Naive thymus-derived CD4-positive, alpha-beta T cell (primary cell): ENCODE measurements at regions of chr10 and their contacts with region 1.

Region 1: DNA sequence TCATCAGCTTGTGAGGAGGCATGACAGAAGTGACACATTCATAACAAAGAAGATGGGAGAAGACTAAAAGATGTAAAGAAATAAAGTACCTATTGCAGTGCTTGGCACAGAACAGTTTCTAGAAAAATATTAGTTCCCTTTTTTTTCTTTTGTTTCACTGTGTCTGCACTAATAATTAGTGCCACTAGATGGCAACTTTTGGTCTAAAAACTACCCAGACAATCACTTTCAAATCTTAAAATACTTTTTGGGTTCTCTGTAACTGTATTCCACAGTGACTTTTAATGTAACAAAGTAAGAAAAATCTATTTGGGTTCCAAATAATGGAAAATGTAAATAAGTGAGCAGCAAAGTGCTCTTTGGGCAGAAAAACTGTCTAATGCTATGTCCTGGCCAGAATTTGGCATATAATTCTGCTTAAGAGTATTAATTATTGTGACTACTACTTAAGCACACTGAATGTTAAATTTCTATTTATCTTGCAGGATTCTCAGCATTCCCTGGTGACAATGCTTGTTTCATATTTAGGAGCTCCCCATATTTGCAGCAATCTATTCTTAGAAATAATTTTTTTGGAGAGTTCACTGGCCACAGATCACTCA is 134.8 kb upstream of the KIF5B start:
- DNase-seq: peak in 6 of 9 donors; percentile 17 to 49 (median 42)
- ATAC-seq: peak; percentile 70
- H3K4me3 ChIP-seq: no peak overlapping the region
- H3K4me3 Mint-ChIP-seq: no peak overlapping the region
- H3K27ac ChIP-seq: no peak overlapping the region
- H3K27ac Mint-ChIP-seq: peak overlapping the region in 1 of 9 donors; percentile 3
- H3K4me1 ChIP-seq: no peaks in the 10 kb centered on the region
- H3K4me1 Mint-ChIP-seq: peaks cover 0 to 5% (median 4%) of the 10 kb centered on the region in 7 donors
- H3K27me3 ChIP-seq: no peaks in the 10 kb centered on the region
- H3K27me3 Mint-ChIP-seq: peaks cover 0 to 9% (median 0%) of the 10 kb centered on the region in 5 donors

Region 2: GRCh38 chr10:32207544-32207943 is 16.6 kb after region 1 on chr10:
- CTCF ChIA-PET with region 1: interaction called, 4 read pairs
- POLR2A ChIA-PET with region 1: no interaction called
- intact Hi-C with region 1: loop called (anchors 1 kb)
- DNase-seq: peak; percentile 18 to 65 (median 40)
- ATAC-seq: peak; percentile 91
- H3K4me3 ChIP-seq: no peak overlapping the region
- H3K4me3 Mint-ChIP-seq: no peak overlapping the region
- H3K27ac ChIP-seq: no peak overlapping the region
- H3K27ac Mint-ChIP-seq: no peak overlapping the region
- H3K4me1 ChIP-seq: no peaks in the 10 kb centered on the region
- H3K4me1 Mint-ChIP-seq: peaks cover 0 to 5% (median 4%) of the 10 kb centered on the region in 7 donors
- H3K27me3 ChIP-seq: no peaks in the 10 kb centered on the region
- H3K27me3 Mint-ChIP-seq: peaks cover 0 to 6% (median 0%) of the 10 kb centered on the region in 5 donors

Region 3: DNA sequence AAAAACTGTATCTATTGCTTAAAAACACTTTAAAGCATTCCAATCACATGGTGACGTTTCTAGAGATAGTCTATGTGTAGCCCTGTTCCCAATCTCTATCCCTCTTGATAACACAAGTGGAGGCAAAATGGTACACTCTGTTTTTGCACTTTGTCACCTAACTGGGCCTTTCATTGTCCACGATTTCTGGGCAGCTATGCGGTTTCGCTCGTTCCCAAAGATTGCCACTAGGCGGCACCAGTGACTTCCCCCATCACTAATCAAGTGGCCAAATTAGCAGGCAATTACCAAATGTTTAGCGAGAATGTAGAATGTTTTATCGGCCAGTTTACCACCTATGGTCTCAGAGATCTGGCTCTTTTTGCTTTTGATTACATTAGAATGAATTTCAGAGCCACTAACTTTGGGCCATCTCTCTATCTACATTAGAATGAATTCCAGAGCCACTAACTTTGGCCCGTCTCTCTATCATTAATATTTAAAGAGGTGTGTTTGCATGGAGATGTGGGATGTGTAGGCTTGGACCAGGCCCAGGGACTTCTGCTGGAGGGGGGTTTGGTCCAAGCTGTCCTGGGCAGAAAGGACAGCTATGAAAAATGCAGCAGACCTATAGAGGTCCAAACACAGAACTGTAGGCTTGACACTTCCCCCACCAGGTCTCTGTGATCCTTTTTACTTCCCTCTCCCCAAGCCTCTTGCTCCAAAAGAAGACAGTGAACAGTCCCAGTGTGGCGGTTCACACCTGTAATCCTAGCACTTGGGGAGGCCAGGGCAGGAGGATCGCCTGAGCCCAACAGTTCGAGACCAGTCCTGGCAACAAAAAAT is 65.8 kb after region 1 on chr10:
- CTCF ChIA-PET with region 1: no interaction called
- POLR2A ChIA-PET with region 1: no interaction called
- intact Hi-C with region 1: loop called in 1 of 2 experiments (anchors 2 kb)
- DNase-seq: peak; percentile 31 to 67 (median 57)
- ATAC-seq: peak; percentile 89
- H3K4me3 ChIP-seq: no peak overlapping the region
- H3K4me3 Mint-ChIP-seq: peak overlapping the region in 1 of 10 donors; percentile 60
- H3K27ac ChIP-seq: no peak overlapping the region
- H3K27ac Mint-ChIP-seq: peak overlapping the region in 1 of 9 donors; percentile 51
- H3K4me1 ChIP-seq: peaks cover 0 to 5% of the 10 kb centered on the region in 2 donors
- H3K4me1 Mint-ChIP-seq: peaks cover 1 to 13% (median 5%) of the 10 kb centered on the region in 7 donors
- H3K27me3 ChIP-seq: no peaks in the 10 kb centered on the region
- H3K27me3 Mint-ChIP-seq: no peaks in the 10 kb centered on the region

Region 4: DNA sequence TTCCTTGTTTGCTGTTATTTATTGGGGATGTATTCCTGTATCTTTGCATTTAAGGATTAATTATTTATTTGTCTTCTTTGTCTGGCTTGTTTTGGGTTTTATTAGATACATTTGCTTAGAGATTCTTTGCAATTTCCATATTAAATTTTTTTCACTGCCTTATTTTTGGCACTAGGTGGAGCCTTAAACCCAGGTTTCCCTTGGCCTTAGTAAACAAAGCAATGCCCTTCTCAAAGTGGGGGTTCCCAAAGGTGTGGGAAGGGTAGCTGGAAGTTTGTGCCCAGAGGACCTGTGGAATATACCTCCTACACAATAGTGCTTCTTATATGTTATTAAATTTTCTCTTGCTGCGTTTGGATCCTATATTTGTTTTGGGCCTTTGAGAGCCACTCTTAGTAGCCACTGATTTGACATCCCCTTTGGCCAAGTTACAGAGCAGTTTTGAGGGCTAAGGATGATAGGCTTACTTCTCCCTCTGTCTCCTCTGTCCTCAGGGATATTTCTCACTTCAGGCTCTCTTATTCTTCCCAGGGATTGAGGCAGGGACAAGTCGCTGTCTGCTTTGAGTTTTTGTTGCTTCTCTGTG is 604.7 kb after region 1 on chr10:
- CTCF ChIA-PET with region 1: no interaction called
- POLR2A ChIA-PET with region 1: no interaction called
- intact Hi-C with region 1: loop called in 1 of 2 experiments (anchors 2 kb)
- DNase-seq: peak in 5 of 9 donors; percentile 12 to 37 (median 22)
- ATAC-seq: peak; percentile 54
- H3K4me3 ChIP-seq: no peak overlapping the region
- H3K4me3 Mint-ChIP-seq: no peak overlapping the region
- H3K27ac ChIP-seq: no peak overlapping the region
- H3K27ac Mint-ChIP-seq: no peak overlapping the region
- H3K4me1 ChIP-seq: peaks cover 0 to 4% of the 10 kb centered on the region in 2 donors
- H3K4me1 Mint-ChIP-seq: no peaks in the 10 kb centered on the region
- H3K27me3 ChIP-seq: no peaks in the 10 kb centered on the region
- H3K27me3 Mint-ChIP-seq: peaks cover 0 to 3% (median 0%) of the 10 kb centered on the region in 5 donors

Region 5: DNA sequence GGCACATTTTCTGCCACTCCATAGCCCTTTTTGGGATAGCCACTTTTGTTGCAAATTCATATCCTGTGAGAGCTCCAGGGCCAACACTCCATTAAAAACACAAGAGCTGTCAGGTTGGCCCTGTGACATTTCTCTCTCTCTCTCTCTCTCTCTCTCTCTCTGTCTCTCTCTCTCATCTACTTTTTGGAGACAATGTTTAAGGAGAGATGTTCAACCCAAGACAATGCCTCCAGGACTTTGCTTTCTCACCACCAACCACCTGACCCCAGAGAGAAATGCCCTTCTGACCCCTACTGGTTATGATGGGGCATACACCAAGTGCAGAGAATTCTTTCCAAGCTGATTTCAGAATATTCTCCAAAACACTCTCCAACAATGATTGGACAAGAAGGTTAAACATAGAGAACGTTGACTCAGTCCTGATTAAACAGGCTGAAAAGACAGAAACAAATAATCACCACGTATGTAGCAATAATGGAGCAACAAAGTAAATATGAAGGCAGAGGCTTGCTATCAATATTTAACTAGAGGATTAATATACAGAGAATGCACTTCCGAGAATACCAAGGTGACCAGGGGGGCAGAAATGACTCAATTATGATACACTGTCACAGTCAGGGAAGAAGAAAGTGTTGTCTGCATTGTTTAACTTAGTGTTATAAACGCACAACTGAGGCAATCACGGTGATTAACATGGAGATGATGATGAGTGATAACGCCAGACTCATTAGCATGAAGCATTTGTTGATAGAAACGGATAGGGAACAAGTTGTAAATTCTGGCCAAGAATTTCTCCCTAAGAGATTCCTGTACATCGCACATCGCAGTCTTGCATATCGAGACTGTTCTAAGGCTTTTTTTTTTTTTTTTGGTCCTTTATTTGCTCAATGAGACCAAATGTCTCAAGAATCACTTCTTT is 965.0 kb after region 1 on chr10:
- CTCF ChIA-PET with region 1: interaction called, 3 read pairs
- POLR2A ChIA-PET with region 1: no interaction called
- intact Hi-C with region 1: loop called in 1 of 2 experiments (anchors 1 kb)
- DNase-seq: peak in 7 of 9 donors; percentile 28 to 65 (median 55)
- ATAC-seq: peak; percentile 85
- H3K4me3 ChIP-seq: no peak overlapping the region
- H3K4me3 Mint-ChIP-seq: no peak overlapping the region
- H3K27ac ChIP-seq: no peak overlapping the region
- H3K27ac Mint-ChIP-seq: peak overlapping the region in 8 of 9 donors; percentile 0 to 88 (median 41)
- H3K4me1 ChIP-seq: peaks cover 15 to 44% of the 10 kb centered on the region in 2 donors
- H3K4me1 Mint-ChIP-seq: peaks cover 8 to 41% (median 35%) of the 10 kb centered on the region in 7 donors
- H3K27me3 ChIP-seq: no peaks in the 10 kb centered on the region
- H3K27me3 Mint-ChIP-seq: no peaks in the 10 kb centered on the region